Sciatic nerve (tissue), 2 donors: ENCODE measurements at regions of chr2 and their contacts with region 1.

Region 1: GRCh38 chr2:218466016-218466521 is 47.1 kb downstream of the VIL1 start:
- DNase-seq: no peak
- ATAC-seq: peak; percentile 59

Region 2: GRCh38 chr2:218301176-218301819 is 164.8 kb before region 1 on chr2:
- intact Hi-C with region 1: loop called (anchors 10 kb)
- DNase-seq: peak; percentile 92
- ATAC-seq: peak; percentile 83